ENCODE measurements at regions of chr17 and their contacts with region 1.

Region 1: DNA sequence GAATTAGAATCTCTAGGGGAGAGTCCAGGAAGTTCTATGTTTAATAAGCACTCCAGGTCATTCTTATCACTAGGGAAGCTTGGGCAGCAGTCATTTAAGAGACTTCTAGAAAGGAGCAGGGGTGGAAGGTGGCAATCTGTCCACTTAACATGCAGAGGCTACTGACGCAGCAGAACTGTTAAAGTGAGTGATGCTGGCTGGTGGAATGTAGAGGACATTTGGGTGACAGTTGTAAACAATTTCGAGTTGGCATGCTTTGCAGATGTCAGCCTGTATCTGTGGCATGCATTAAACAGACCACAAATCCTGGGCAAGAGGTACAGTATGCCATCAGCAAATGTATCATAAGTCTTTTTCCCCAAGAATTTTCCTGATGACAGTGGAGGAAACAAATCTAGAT is 40.5 kb upstream of the HS3ST3A1 start:
- DNase-seq: no peak
- H3K4me3 ChIP-seq: no peak overlapping the region
- H3K27ac ChIP-seq: no peak overlapping the region
- H3K4me1 ChIP-seq: no peaks in the 10 kb centered on the region
- H3K27me3 ChIP-seq: no peaks in the 10 kb centered on the region
- CTCF ChIP-seq: no peak
- POLR2A ChIP-seq: no peak

Region 2: GRCh38 chr17:13702266-13702665 is 60.1 kb after region 1 on chr17:
- intact Hi-C with region 1: loop called (anchors 2 kb)
- DNase-seq: no peak
- H3K4me3 ChIP-seq: no peak overlapping the region
- H3K27ac ChIP-seq: no peak overlapping the region
- H3K4me1 ChIP-seq: no peaks in the 10 kb centered on the region
- H3K27me3 ChIP-seq: no peaks in the 10 kb centered on the region
- CTCF ChIP-seq: no peak
- POLR2A ChIP-seq: no peak

Region 3: GRCh38 chr17:15123593-15124263 is 1481.5 kb after region 1 on chr17:
- intact Hi-C with region 1: no loop called
- DNase-seq: no peak
- H3K4me3 ChIP-seq: no peak overlapping the region
- H3K27ac ChIP-seq: no peak overlapping the region
- H3K4me1 ChIP-seq: no peaks in the 10 kb centered on the region
- H3K27me3 ChIP-seq: no peaks in the 10 kb centered on the region
- CTCF ChIP-seq: no peak
- POLR2A ChIP-seq: no peak

Measured in breast epithelium (tissue), 4 donors.